ENCODE measurements at regions of chr2 and their contacts with region 1.

Region 1: DNA sequence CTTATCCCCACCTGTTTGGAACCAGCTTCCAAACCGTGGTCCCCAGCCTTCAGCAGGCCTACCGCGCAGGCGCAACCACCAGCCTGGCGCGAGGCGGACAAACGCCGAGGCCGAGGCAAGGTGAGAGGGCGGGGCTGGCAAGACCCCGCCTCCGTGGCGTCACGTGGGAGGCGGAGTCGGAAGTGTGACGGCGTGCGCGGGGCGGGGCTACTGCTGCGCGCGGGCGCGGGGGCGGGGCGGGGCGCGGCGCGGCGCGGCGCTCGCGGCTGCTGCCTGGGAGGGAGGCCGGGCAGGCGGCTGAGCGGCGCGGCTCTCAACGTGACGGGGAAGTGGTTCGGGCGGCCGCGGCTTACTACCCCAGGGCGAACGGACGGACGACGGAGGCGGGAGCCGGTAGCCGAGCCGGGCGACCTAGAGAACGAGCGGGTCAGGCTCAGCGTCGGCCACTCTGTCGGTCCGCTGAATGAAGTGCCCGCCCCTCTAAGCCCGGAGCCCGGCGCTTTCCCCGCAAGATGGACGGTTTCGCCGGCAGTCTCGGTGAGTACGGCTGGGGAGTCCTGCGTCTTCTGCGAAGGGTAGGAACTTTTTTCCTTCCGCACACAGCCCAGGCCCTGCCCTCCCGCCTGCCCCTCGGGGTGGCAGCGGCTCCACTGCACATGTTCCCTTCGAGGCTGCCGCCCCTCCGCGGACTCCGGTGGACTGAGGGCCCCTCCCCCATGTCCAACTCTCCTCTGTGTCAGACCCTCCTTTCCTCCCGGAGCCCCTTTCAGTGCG is at the start of gene EML4:
- DNase-seq: peak; percentile 97
- ATAC-seq: peak; percentile 88
- H3K4me3 Mint-ChIP-seq: no peak within 1 kb of the TSS
- H3K27ac Mint-ChIP-seq: no peak within 1 kb of the TSS
- H3K4me1 Mint-ChIP-seq: peaks cover 26% of the 10 kb centered on the region
- H3K27me3 Mint-ChIP-seq: no peaks in the 10 kb centered on the region
- CTCF ChIP-seq: no peak
- total RNA-seq, gene EML4: 83.2 and 95.8 TPM in 2 replicates

Region 2: GRCh38 chr2:42095923-42096408 is 73.3 kb before region 1 on chr2:
- CTCF ChIA-PET with region 1: interaction called, 18 read pairs
- POLR2A ChIA-PET with region 1: interaction called, 18 read pairs
- intact Hi-C with region 1: no loop called
- DNase-seq: peak; percentile 45
- ATAC-seq: peak; percentile 30
- H3K4me3 Mint-ChIP-seq: no peak overlapping the region
- H3K27ac Mint-ChIP-seq: no peak overlapping the region
- H3K4me1 Mint-ChIP-seq: peaks cover 49% of the 10 kb centered on the region
- H3K27me3 Mint-ChIP-seq: no peaks in the 10 kb centered on the region
- CTCF ChIP-seq: peak; percentile 31

Region 3: GRCh38 chr2:42117923-42118753 is 51.1 kb before region 1 on chr2:
- CTCF ChIA-PET with region 1: interaction called, 3 read pairs
- POLR2A ChIA-PET with region 1: interaction called, 3 read pairs
- intact Hi-C with region 1: loop called (anchors 1 kb)
- DNase-seq: no peak
- ATAC-seq: peak; percentile 90
- H3K4me3 Mint-ChIP-seq: peak overlapping the region; percentile 28
- H3K27ac Mint-ChIP-seq: peak overlapping the region; percentile 69
- H3K4me1 Mint-ChIP-seq: peaks cover 67% of the 10 kb centered on the region
- H3K27me3 Mint-ChIP-seq: no peaks in the 10 kb centered on the region
- CTCF ChIP-seq: no peak

Region 4: DNA sequence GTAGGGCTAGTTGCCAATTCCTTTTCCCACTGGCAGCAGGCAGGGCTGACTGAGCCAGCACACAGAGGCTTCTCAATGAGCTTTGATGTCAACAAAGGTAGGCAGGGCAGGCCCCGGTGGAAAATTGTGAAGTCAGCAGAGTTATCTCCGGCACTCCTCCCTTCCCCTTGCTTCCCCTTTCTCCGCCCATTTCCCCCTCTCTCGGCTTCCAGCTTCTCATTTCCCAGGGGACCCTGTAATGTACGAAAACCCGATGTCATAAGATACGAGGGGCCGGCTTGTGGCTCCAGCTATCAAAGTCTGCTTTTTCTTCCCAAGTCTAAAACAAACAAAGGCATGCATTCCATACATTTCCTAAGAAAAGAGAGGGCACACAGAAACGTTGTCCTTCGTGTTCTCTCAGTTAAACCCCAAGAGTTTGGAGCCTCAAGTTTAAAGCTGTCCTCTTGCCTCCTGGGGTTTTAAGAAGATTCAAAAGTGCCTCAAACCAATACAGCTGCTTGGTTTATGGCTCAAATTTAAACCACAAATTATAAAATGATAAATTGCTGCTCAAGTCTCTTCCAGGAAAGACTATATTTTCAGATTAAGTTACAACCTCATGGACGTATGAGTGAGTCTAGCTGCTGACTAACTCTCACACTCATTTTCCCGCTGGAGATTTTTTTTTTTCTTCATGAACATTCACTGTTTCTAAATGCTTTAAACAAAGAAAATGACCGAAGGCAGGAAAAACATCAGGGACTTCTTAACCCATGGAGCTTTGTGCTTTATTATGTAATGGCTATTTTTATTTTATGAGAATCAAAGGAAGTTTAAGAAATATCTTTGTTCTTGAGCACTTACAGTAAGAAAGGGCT is 27.4 kb before region 1 on chr2:
- CTCF ChIA-PET with region 1: interaction called, 4 read pairs
- POLR2A ChIA-PET with region 1: interaction called, 10 read pairs
- intact Hi-C with region 1: no loop called
- DNase-seq: no peak
- ATAC-seq: peak; percentile 67
- H3K4me3 Mint-ChIP-seq: peak overlapping the region; percentile 53
- H3K27ac Mint-ChIP-seq: peak overlapping the region; percentile 41
- H3K4me1 Mint-ChIP-seq: peaks cover 33% of the 10 kb centered on the region
- H3K27me3 Mint-ChIP-seq: no peaks in the 10 kb centered on the region
- CTCF ChIP-seq: no peak

Region 5: GRCh38 chr2:42713971-42714370 is 544.7 kb after region 1 on chr2:
- CTCF ChIA-PET with region 1: no interaction called
- POLR2A ChIA-PET with region 1: no interaction called
- intact Hi-C with region 1: no loop called
- DNase-seq: no peak
- ATAC-seq: no peak
- H3K4me3 Mint-ChIP-seq: no peak overlapping the region
- H3K27ac Mint-ChIP-seq: no peak overlapping the region
- H3K4me1 Mint-ChIP-seq: no peaks in the 10 kb centered on the region
- H3K27me3 Mint-ChIP-seq: no peaks in the 10 kb centered on the region
- CTCF ChIP-seq: no peak

Measured in activated B cell treated with CpG ODN at 0.5 μM for 24 hours (primary cell).